Astrocyte of the cerebellum (primary cell): ENCODE measurements at regions of chr4 and their contacts with region 1.

Region 1: DNA sequence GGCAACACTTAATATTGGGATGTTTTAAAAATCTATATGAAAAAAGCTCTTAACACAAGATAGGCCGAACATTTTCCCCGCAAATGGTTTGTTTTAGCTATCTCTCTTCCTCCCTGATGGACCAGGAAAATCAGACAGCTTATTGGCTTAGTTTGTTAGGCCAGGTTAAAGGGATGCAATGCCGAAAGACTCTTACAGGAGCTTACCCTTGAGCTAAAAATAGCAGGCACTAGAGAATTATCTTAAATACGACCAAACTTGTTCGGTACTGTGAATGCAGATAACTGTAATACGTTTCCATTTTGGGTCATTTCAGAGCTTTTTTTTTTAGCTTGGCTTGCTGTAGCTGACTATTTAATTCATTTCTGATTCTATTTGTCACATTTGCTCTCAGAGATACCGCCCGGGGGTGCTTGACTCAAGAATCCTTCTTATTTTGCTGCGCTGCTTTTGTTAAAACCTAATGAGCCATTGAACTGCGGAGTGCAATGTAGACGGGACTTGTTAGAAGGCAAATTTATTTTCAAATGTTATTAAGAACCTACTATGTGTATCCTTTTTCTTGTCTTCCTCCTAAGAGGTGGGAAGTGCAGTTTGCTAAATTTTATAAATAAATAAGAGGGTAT is 23.3 kb downstream of the PPARGC1A start:
- DNase-seq: no peak
- H3K4me3 ChIP-seq: no peak overlapping the region
- CTCF ChIP-seq: no peak

Region 2: DNA sequence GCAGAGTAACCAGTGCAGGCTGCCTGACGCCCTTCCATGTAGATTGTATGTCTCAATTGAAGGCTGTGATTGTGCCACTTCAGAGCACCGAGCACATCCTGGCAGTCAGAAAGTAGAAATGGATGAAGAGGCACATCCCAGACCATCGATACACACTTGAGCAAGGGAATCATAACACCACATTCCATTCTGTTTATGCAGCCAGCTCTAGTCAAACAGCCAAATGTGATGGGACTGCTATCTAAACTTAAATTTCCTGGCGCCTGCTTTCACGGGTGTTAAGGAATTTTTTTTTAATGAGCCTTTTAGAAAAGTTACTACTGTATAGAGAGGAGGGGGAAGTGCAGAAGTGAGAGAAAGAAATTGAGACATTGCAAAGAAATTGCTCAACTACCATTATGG is 61.1 kb before region 1 on chr4:
- in situ Hi-C with region 1: loop called (anchors 5 kb)
- DNase-seq: no peak
- H3K4me3 ChIP-seq: no peak overlapping the region
- CTCF ChIP-seq: no peak

Region 3: GRCh38 chr4:23945451-23946017 is 79.0 kb after region 1 on chr4:
- in situ Hi-C with region 1: no loop called
- DNase-seq: no peak
- H3K4me3 ChIP-seq: no peak overlapping the region
- CTCF ChIP-seq: no peak